ENCODE measurements at regions of chr2 and their contacts with region 1.

Region 1: DNA sequence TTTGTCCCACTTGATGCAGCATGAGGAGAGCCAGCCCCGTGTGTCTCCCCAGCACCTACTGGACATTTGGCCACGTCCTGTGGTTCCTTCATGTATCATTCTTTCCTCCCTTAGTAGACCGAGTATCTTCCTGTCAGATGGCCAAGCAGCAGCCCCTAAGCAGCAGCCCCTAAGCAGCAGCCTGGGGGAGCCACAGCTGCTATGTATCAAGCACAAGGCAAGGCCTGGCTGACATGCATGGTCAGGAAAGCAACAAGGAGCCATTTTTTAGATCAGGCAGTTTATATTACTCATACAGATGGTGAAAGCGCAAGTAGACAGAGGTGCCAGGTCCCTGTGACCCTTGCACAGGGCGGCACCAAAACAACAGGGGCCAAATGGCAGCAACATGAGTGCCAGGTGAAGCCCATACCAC is 22.1 kb downstream of the CHCHD5 start:
- DNase-seq: no peak
- H3K4me3 ChIP-seq: no peak overlapping the region
- CTCF ChIP-seq: no peak

Region 2: GRCh38 chr2:111522231-111522768 is 1084.2 kb before region 1 on chr2:
- in situ Hi-C with region 1: no loop called
- DNase-seq: no peak
- H3K4me3 ChIP-seq: no peak overlapping the region
- CTCF ChIP-seq: no peak

Region 3: DNA sequence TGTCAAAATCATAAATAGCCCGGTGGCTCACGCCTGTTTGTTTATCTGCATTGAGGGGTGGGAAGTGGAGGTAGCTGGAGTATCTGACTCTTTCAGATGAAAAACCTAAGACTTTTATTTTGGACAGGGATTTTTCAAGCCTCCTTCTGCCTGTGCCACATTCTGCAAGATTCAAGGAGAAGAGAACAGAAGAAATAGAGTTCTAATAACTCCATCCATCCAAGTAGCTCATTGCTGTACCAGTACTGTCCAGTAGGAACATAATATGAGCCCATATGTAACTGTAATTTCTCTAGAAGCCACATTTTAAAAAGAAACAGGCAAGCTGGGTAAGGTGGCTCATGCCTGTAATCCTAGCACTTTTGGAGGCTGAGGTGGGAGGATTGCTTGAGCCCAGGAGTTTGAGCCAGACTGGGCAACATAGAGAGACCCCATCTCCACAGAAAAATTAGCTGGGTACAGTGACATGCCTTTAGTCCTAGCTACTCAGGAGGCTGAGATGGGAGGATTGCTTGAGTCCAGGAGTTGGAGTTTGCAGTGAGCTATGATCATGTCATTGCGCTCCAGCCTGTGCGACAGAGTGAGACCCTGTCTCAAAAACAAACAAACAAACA is 78.9 kb after region 1 on chr2:
- in situ Hi-C with region 1: loop called (anchors 5 kb)
- DNase-seq: no peak
- H3K4me3 ChIP-seq: no peak overlapping the region
- CTCF ChIP-seq: peak; percentile 29

Region 4: GRCh38 chr2:113060396-113060795 is 453.9 kb after region 1 on chr2:
- in situ Hi-C with region 1: no loop called
- DNase-seq: no peak
- H3K4me3 ChIP-seq: no peak overlapping the region
- CTCF ChIP-seq: no peak